Activated CD4-positive, alpha-beta T cell treated with anti-CD3 and anti-CD28 coated beads for 36 hours (primary cell): ENCODE measurements at regions of chr11 and their contacts with region 1.

Region 1: GRCh38 chr11:108697872-108698473 is 33.1 kb downstream of the DDX10 start:
- DNase-seq: peak; percentile 66
- ATAC-seq: peak; percentile 73
- H3K4me3 Mint-ChIP-seq: no peak overlapping the region
- H3K27ac Mint-ChIP-seq: no peak overlapping the region
- H3K4me1 Mint-ChIP-seq: no peaks in the 10 kb centered on the region
- H3K27me3 Mint-ChIP-seq: no peaks in the 10 kb centered on the region

Region 2: GRCh38 chr11:108733479-108734116 is 35.6 kb after region 1 on chr11:
- CTCF ChIA-PET with region 1: interaction called, 5 read pairs
- POLR2A ChIA-PET with region 1: no interaction called
- intact Hi-C with region 1: loop called in 1 of 2 experiments (anchors 1 kb)
- DNase-seq: peak; percentile 65
- ATAC-seq: peak; percentile 99
- H3K4me3 Mint-ChIP-seq: no peak overlapping the region
- H3K27ac Mint-ChIP-seq: peak overlapping the region; percentile 81
- H3K4me1 Mint-ChIP-seq: peaks cover 56% of the 10 kb centered on the region
- H3K27me3 Mint-ChIP-seq: no peaks in the 10 kb centered on the region

Region 3: GRCh38 chr11:108871152-108871551 is 173.2 kb after region 1 on chr11:
- CTCF ChIA-PET with region 1: interaction called, 10 read pairs
- POLR2A ChIA-PET with region 1: no interaction called
- intact Hi-C with region 1: loop called (anchors 1 kb)
- DNase-seq: peak; percentile 59
- ATAC-seq: peak; percentile 47
- H3K4me3 Mint-ChIP-seq: no peak overlapping the region
- H3K27ac Mint-ChIP-seq: no peak overlapping the region
- H3K4me1 Mint-ChIP-seq: peaks cover 24% of the 10 kb centered on the region
- H3K27me3 Mint-ChIP-seq: no peaks in the 10 kb centered on the region

Region 4: GRCh38 chr11:109155291-109155690 is 457.3 kb after region 1 on chr11:
- CTCF ChIA-PET with region 1: no interaction called
- POLR2A ChIA-PET with region 1: no interaction called
- intact Hi-C with region 1: no loop called
- DNase-seq: no peak
- ATAC-seq: no peak
- H3K4me3 Mint-ChIP-seq: no peak overlapping the region
- H3K27ac Mint-ChIP-seq: no peak overlapping the region
- H3K4me1 Mint-ChIP-seq: peaks cover 2% of the 10 kb centered on the region
- H3K27me3 Mint-ChIP-seq: peaks cover 3% of the 10 kb centered on the region

Region 5: GRCh38 chr11:109697140-109697843 is 999.3 kb after region 1 on chr11:
- CTCF ChIA-PET with region 1: no interaction called
- POLR2A ChIA-PET with region 1: no interaction called
- intact Hi-C with region 1: loop called (anchors 2 to 5 kb)
- DNase-seq: peak; percentile 13
- ATAC-seq: peak; percentile 60
- H3K4me3 Mint-ChIP-seq: no peak overlapping the region
- H3K27ac Mint-ChIP-seq: no peak overlapping the region
- H3K4me1 Mint-ChIP-seq: no peaks in the 10 kb centered on the region
- H3K27me3 Mint-ChIP-seq: no peaks in the 10 kb centered on the region

Region 6: GRCh38 chr11:109939166-109939810 is 1241.3 kb after region 1 on chr11:
- CTCF ChIA-PET with region 1: interaction called, 4 read pairs
- POLR2A ChIA-PET with region 1: no interaction called
- intact Hi-C with region 1: loop called in 1 of 2 experiments (anchors 5 kb)
- DNase-seq: no peak
- ATAC-seq: no peak
- H3K4me3 Mint-ChIP-seq: no peak overlapping the region
- H3K27ac Mint-ChIP-seq: no peak overlapping the region
- H3K4me1 Mint-ChIP-seq: no peaks in the 10 kb centered on the region
- H3K27me3 Mint-ChIP-seq: peaks cover 6% of the 10 kb centered on the region